Dendritic cell treated with granulocyte-macrophage colony-stimulating factor and Interleukin-4, amounts not matched to agents 40 ng/mL and 50 ng/mL, for 4 days (primary cell): ENCODE measurements at regions of chr1 and their contacts with region 1.

Region 1: GRCh38 chr1:178037503-178038253 is 56.2 kb upstream of the RASAL2 start:
- H3K4me3 Mint-ChIP-seq: peak overlapping the region; percentile 91
- H3K27ac Mint-ChIP-seq: peak overlapping the region; percentile 93
- H3K4me1 Mint-ChIP-seq: no peaks in the 10 kb centered on the region
- H3K27me3 Mint-ChIP-seq: peaks cover 10% of the 10 kb centered on the region

Region 2: DNA sequence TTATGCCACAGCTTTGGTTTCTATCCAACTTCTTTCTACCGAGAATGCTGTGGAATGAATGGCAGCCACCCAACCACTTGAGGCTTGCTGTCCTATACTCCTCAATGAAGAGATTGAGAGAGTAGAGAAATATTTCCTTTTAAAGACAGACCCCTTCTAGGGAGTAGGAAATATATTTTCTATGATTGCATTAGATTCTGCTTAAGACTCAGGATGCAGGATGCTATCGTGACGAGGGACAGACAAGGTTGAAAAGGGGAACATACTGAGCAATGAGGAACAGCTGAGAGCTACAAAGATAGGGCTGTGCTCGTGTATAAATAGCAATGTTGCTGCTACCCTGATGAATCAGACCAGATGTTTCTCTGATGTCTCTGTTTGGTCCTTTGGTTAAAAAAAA is 49.1 kb after region 1 on chr1:
- intact Hi-C with region 1: loop called (anchors 5 kb)
- H3K4me3 Mint-ChIP-seq: no peak overlapping the region
- H3K27ac Mint-ChIP-seq: no peak overlapping the region
- H3K4me1 Mint-ChIP-seq: peaks cover 20% of the 10 kb centered on the region
- H3K27me3 Mint-ChIP-seq: no peaks in the 10 kb centered on the region

Region 3: DNA sequence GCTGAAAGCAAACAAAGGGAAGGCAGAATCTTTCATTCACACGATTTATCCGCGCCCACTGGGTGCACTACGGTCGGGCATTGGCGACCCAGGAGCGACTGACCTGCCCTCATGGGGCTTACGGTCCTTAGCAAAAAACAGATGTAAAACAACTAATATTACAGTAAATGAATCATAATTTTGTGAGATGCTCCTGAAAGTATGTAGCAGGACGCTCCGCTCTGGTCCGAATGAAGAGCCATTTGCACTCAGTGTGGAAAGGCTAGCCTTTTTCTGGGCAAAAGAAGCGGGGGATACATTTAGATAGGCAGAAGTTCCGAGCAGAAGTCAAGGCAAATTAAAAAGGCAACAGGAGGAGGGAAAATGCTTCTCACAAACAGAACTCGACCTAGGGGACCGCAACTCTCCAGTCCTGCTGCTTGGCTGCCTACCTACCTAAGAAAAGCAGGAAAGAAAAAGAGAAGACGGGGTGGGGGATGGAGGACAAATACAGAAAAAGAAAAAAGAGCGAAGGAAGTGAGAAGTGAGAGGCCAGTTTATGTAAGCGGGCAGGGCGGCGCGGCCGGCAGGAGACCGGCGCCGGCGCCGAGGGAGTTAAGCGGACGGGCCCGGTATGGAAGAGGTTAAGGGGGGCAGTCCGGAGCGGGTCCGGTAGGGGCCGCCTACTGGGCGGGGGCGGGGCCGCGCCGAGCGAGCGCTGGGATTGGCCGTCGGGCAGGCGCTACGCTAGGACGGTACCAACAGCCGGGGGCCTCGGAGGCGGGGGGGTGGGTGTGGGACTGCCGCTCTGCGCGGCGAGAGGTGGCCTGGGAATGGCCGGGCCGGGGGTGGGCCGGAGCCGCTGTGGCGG is 987.7 kb after region 1 on chr1 and contains the start of gene FAM20B:
- intact Hi-C with region 1: loop called (anchors 5 kb)
- H3K4me3 Mint-ChIP-seq: peak within 1 kb of the TSS; percentile 83
- H3K27ac Mint-ChIP-seq: peak within 1 kb of the TSS; percentile 84
- H3K4me1 Mint-ChIP-seq: peaks cover 63% of the 10 kb centered on the region
- H3K27me3 Mint-ChIP-seq: peaks cover 1% of the 10 kb centered on the region